Brain microvascular endothelial cell (primary cell): ENCODE measurements at regions of chr14 and their contacts with region 1.

Region 1: DNA sequence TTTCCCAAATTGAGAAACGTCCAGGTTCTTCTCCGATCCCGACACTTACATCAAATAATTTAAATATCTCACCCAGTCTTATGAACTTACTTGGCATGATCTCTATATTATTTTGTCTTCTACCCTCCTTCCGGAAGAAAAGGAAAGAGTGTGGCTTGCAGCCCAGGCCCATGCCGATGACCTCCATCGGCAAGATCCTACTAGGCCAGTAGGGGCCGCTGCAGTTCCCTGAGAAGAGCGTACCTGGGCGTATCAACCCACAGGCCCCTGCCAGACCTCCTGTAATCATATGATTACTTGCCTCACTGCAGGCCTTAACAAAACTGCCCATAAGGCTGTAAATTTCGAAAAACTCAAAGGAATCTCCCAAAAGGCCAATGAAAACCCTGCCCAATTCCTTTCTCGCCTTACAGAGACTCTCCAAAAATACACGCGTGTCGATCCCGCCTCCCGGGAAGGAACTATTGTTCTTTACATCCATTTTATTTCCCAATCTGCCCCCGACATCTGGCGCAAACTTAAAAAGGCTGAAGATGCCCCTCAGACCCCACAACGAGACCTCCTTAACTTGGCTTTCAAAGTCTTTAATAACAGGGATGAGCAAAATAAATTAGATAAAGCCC is 69.6 kb downstream of the MOK start:
- DNase-seq: peak; percentile 77
- H3K4me3 ChIP-seq: peak overlapping the region; percentile 9
- H3K27ac ChIP-seq: peak overlapping the region; percentile 18
- H3K27me3 ChIP-seq: no peaks in the 10 kb centered on the region
- CTCF ChIP-seq: peak; percentile 90

Region 2: GRCh38 chr14:102316743-102317563 is 81.6 kb after region 1 on chr14:
- in situ Hi-C with region 1: loop called (anchors 10 kb)
- DNase-seq: peak; percentile 88
- H3K4me3 ChIP-seq: peak overlapping the region; percentile 66
- H3K27ac ChIP-seq: peak overlapping the region; percentile 78
- H3K27me3 ChIP-seq: no peaks in the 10 kb centered on the region
- CTCF ChIP-seq: peak; percentile 71

Region 3: DNA sequence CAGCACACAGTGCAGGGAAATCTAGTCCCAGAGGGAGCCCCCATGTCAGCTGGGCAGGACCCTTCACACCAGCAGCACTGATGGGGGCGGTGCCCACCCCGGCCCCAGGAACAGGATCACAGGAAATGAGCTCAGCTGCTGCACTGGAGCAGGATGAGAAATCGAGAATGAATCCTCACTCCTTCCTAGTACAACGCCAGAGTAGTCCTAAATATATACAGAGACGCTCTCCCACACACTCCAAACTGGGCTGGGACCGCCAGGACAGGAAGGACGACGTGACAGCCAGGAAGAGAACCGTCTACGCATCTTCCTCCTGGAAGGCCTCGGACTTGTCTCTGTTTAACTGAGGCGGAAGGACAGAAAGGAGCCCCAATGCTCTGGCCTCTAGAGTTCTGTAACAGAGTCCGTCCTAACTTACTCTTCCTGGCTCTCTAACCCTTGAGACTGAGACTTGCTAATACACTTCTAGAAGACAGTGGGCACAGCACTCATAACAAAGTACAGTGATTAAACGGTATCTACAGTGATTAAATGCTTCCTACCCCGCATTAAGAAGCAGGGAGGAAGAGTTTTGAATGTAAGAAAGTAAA is 788.6 kb after region 1 on chr14:
- in situ Hi-C with region 1: no loop called
- DNase-seq: peak; percentile 79
- H3K4me3 ChIP-seq: peak overlapping the region; percentile 40
- H3K27ac ChIP-seq: peak overlapping the region; percentile 81
- H3K27me3 ChIP-seq: no peaks in the 10 kb centered on the region
- CTCF ChIP-seq: no peak